Motor neuron (in vitro differentiated cells): ENCODE measurements at regions of chr11 and their contacts with region 1.

Region 1: DNA sequence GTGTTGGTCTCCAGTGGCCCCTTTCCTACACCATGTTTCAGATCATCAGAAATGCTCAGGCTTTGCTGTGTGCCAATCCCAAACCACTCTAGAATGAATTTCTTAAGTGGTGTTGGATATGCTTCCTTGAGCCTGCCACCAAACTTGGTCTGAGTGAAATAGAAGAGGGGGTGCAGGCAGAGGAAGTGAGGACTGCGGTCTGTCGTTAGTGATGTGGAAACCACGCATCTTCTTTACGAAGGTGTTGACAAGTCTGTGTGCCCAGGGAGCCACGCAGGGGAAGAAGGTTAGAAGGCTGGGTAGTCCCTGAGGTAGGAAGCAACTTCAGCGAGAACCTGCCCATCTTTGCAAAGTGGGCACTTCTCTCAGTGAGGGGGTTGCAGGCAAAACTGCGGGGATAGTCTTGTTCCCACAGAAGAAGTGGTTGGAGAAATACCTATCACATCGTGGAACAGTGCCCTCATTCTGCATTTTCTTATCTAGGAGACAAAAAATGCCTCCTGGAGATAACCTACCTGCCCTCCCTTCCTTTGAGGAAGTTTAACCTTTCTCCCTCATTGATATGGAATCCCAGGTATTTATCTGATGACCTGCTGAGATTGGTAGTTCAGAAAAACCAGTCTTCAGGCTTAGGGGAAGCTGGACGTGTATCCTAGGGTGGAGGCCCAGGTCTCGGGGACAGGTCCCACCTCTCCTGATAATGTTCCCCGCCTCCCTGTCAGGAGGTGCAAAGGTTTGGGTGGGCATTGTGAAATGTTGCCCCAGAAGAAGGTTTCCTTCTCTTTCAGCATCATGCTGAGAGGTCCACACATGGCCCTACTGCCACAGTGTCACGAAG is 187.1 kb upstream of the NAV2 start:
- ATAC-seq: no peak
- H3K4me3 ChIP-seq: no peak overlapping the region
- H3K27ac ChIP-seq: no peak overlapping the region
- H3K4me1 ChIP-seq: peaks cover 50 to 67% of the 10 kb centered on the region in 2 donors

Region 2: DNA sequence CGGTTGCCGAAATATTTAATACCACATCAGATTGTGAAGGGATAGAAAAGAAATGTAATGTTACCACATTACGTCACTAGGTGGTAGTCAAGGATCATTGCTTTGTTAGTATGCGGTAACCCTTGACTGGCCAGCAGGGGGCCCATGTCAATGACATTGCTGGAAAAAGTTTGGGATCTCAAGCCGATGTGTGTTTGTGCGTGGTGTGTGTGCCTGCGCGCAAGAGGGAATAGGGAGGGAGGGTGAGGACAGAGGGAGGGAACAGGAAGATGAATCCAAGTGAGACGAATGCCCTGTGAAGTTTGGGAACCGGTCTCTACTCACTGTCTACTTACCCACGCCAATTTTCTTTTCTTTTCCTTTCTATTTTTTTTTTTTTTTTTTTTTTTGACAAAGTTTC is 454.2 kb before region 1 on chr11:
- in situ Hi-C with region 1: loop called in 3 of 9 experiments (anchors 25 kb)
- ATAC-seq: peak; percentile 81 to 100 (median 90)
- H3K4me3 ChIP-seq: no peak overlapping the region
- H3K27ac ChIP-seq: no peak overlapping the region
- H3K4me1 ChIP-seq: no peaks in the 10 kb centered on the region

Region 3: DNA sequence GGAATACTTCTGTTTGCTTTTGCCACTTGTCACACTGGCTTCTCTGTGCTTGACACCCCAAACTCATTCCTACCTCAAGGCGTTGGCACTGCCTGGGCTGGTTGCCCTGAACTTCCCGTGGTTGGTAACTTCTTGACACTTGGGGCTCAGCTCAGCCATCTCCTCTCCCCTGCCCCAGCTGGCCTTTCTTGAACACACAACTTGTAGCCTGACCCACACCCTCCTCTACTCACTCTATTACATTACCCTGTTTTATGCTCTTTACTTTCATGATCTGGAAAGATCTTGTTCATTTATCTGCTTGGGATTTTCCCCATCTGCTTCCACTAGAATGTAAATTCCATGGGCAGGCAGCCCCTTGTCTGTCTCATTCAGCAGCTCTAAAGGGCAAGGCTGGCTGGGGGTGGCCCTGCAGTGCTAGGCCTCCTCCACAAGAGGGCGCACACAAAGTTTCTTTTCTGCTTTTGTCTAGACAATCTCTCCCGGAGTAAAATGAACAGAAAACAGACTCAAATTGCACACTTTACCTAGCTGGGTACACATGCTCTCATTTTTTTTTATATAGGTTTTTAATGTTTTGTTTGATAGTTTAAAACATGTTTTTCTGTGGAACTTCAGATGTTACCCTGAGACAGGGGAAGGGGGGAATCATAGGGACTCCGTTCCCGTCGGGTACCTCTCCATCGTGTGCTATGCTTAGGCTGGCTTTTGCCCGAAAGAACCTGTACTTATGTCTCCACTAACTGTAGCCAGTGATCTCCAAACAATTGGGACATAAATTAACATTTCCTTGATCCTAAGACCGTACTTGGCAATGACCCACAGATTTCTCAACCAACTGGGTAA is 448.5 kb before region 1 on chr11:
- in situ Hi-C with region 1: loop called in 3 of 9 experiments (anchors 25 kb)
- ATAC-seq: peak; percentile 41 to 81 (median 57)
- H3K4me3 ChIP-seq: no peak overlapping the region
- H3K27ac ChIP-seq: no peak overlapping the region
- H3K4me1 ChIP-seq: peaks cover 0 to 6% of the 10 kb centered on the region in 2 donors

Region 4: DNA sequence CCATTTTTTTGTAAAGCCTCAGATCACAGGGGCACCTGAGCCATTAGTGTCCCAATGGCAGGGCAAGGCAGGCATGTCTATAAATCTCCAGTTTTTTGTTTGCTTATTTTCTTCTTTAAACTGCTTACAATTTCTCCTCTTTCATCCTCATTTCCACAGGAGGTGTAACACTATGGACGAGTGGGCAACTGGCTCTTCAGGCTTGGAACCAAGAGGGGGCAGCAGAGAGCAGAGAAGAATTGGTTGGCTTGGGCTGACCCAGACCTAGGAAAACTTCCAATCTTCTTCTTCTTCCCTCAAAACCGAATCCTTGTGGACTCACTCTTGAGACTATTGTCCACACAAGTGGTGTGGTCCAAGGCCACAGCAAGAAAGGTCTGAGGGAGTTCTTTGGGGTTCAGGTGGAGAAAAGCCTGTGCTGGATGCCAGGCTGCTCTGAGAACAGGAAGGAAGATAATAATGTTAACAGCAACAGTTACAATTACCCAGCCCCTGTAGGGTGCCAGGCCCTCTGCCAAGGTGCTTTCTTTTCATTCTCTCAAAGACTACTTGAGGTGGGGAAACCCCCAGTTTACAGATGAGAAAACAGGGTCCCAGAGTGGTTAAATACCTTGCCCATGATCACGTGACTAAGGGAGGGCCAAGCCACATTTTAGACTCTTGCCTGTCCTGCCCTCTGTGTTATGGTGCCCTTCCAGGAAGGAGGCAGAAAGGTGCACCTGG is 214.0 kb before region 1 on chr11:
- in situ Hi-C with region 1: loop called in 2 of 9 experiments (anchors 25 kb)
- ATAC-seq: peak; percentile 81 to 97 (median 92)
- H3K4me3 ChIP-seq: no peak overlapping the region
- H3K27ac ChIP-seq: no peak overlapping the region
- H3K4me1 ChIP-seq: peaks cover 0 to 2% of the 10 kb centered on the region in 2 donors

Region 5: DNA sequence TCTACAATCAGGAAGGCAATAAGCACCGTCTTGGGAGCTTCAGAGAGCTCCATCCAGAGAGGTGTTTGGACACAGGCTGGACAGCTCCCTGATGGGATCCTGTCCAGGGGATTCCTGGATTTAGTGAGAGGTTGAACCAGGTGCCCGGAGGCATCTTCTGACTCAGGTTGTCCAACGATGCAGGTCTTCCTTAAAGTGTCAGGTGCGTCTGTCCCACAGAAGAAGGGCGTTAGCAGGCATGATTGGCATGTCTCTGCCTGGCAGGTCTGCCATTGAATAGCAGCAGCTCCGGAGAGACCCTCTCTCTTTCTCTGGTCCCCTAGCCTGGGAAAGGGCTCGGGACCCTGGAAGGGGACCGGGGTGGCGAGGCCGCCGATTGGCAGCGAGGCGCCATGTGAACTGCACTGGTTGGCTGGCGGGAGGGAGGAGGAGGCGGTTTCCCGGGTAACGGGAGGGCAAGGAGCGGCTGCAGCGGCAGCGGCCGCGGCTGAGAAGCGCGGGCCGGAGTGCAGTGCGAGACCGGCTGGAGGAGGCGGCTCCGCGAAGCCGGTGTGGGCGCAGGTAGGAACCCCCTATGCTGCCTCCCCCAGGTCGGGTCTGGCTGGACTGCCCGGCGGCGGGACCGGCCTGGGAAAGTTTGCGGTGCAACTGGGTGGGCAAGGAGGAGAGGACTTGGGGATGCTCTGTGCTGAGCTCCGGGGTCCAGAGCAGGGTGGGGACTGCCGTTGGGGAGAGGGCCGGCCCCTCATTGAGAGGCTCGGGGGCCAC is 180.6 kb before region 1 on chr11:
- in situ Hi-C with region 1: loop called in 1 of 9 experiments (anchors 25 kb)
- ATAC-seq: peak; percentile 70 to 87 (median 78)
- H3K4me3 ChIP-seq: peak overlapping the region; percentile 42 to 59 (median 45)
- H3K27ac ChIP-seq: no peak overlapping the region
- H3K4me1 ChIP-seq: peaks cover 27 to 33% of the 10 kb centered on the region in 2 donors